B cell (primary cell): ENCODE measurements at regions of chr7 and their contacts with region 1.

Region 1: DNA sequence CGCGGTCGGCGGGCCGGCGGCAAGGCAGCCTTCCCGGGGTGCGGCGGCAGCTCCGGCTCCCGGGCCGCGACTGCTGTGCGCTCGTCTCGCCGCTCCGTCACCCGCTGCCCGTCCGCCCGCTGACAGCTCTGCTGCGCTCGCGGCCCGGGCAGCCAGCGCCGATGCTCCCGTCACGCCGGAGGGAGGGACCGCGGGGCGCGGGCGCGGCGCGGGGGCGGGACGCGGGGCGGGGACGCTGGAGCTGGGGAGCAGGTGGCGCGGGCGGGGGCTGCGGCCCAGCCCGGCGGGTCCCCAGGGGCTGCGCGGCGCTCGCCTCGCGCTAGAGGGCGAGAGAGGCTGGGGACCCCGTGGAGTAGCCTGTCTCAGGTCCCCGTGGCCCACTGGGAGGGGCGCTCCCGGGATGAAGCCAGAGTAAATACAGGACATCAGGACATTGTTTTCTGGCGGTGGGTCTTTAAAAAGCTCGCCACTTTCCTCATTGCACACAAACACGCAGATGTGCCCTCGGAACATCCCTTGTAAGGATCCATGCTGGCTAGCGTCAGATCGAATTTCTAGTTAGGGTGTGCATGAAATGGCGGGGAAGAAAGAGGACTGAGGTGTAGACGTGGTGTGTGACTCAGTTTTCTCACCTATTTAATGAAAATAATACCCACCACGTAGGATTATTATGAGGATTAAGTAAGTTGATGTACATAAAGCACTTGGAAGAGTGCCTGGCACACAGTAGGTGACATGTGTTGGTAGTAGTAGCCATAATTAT is at the start of gene ELAPOR2:
- DNase-seq: peak; percentile 91
- ATAC-seq: peak; percentile 95
- H3K4me3 ChIP-seq: peak within 1 kb of the TSS; percentile 42 to 79 (median 66)
- H3K4me3 Mint-ChIP-seq: peak within 1 kb of the TSS; percentile 90
- H3K27ac ChIP-seq: peak within 1 kb of the TSS in 1 of 2 donors; percentile 56
- H3K27ac Mint-ChIP-seq: peak within 1 kb of the TSS; percentile 77
- H3K4me1 ChIP-seq: peaks cover 12 to 14% of the 10 kb centered on the region in 2 donors
- H3K4me1 Mint-ChIP-seq: peaks cover 15% of the 10 kb centered on the region
- H3K27me3 ChIP-seq: peaks cover 0 to 3% (median 0%) of the 10 kb centered on the region in 4 experiments
- H3K27me3 Mint-ChIP-seq: no peaks in the 10 kb centered on the region
- CTCF ChIP-seq: peak; percentile 67
- total RNA-seq, gene ELAPOR2: 8.3 and 11.1 TPM in 2 replicates

Region 2: DNA sequence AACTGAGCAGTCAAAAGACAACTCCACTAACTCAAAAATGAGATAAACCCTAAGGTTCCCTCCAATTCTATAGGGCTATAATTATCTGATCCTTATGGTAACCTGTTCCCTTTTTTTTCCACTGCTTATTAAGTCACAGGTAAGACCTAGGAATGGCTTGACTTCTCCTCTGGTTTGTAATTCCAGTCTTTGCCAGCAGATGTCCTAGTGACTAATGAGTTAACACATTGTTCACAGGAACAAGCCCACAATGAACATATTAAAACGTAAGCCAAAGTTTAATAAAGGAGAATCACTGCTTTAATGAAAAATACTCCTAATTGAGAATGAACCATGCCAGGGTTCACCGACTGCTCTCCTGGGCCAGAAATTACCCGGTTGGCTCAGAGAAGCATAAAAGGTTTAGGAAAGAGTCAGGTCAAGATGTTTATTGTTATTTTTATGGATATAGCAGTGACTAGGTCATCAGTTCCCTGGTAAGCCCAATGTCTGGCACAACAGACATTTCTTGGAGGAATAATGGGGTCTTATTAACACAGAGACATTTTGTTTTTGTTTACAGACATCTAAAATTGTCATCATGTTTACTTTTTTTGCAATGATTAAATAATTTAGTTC is 120.4 kb before region 1 on chr7:
- CTCF ChIA-PET with region 1: interaction called, 4 read pairs
- POLR2A ChIA-PET with region 1: no interaction called
- intact Hi-C with region 1: loop called (anchors 5 kb)
- DNase-seq: peak; percentile 59
- ATAC-seq: peak; percentile 49
- H3K4me3 ChIP-seq: no peak overlapping the region
- H3K4me3 Mint-ChIP-seq: no peak overlapping the region
- H3K27ac ChIP-seq: no peak overlapping the region
- H3K27ac Mint-ChIP-seq: no peak overlapping the region
- H3K4me1 ChIP-seq: no peaks in the 10 kb centered on the region
- H3K4me1 Mint-ChIP-seq: no peaks in the 10 kb centered on the region
- H3K27me3 ChIP-seq: no peaks in the 10 kb centered on the region
- H3K27me3 Mint-ChIP-seq: no peaks in the 10 kb centered on the region
- CTCF ChIP-seq: peak; percentile 53

Region 3: GRCh38 chr7:87038993-87039716 is 20.6 kb before region 1 on chr7:
- CTCF ChIA-PET with region 1: no interaction called
- POLR2A ChIA-PET with region 1: no interaction called
- intact Hi-C with region 1: no loop called
- DNase-seq: peak; percentile 32
- ATAC-seq: no peak
- H3K4me3 ChIP-seq: peak overlapping the region in 4 of 5 experiments; percentile 8 to 55 (median 32)
- H3K4me3 Mint-ChIP-seq: peak overlapping the region; percentile 75
- H3K27ac ChIP-seq: peak overlapping the region in 1 of 2 donors; percentile 73
- H3K27ac Mint-ChIP-seq: peak overlapping the region; percentile 17
- H3K4me1 ChIP-seq: no peaks in the 10 kb centered on the region
- H3K4me1 Mint-ChIP-seq: no peaks in the 10 kb centered on the region
- H3K27me3 ChIP-seq: no peaks in the 10 kb centered on the region
- H3K27me3 Mint-ChIP-seq: peaks cover 4% of the 10 kb centered on the region
- CTCF ChIP-seq: no peak

Region 4: DNA sequence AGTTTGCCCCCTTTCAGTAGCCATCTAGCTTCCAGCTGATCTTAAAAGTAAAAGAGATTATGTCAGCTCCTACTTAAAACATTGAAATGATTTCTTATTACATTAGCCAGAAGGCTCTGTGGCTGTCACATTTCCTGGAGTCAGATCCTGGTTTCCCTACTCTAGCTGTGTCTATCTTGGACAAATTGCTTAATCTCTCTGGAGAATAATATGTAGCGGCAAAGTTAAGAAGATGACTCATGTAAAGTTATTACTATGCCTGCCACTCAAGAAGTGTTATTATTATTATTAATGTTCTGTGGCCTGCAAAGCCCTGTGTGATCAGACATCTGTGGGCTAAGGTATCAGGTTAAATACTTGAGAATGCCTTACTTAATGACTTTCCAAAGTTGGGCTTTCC is 675.7 kb after region 1 on chr7:
- CTCF ChIA-PET with region 1: no interaction called
- POLR2A ChIA-PET with region 1: no interaction called
- intact Hi-C with region 1: no loop called
- DNase-seq: no peak
- ATAC-seq: no peak
- H3K4me3 ChIP-seq: no peak overlapping the region
- H3K4me3 Mint-ChIP-seq: no peak overlapping the region
- H3K27ac ChIP-seq: no peak overlapping the region
- H3K27ac Mint-ChIP-seq: no peak overlapping the region
- H3K4me1 ChIP-seq: no peaks in the 10 kb centered on the region
- H3K4me1 Mint-ChIP-seq: no peaks in the 10 kb centered on the region
- H3K27me3 ChIP-seq: no peaks in the 10 kb centered on the region
- H3K27me3 Mint-ChIP-seq: no peaks in the 10 kb centered on the region
- CTCF ChIP-seq: no peak